Ovary (tissue), 10 donors: ENCODE measurements at regions of chr17 and their contacts with region 1.

Region 1: GRCh38 chr17:50071692-50072486 is 16.0 kb downstream of the ITGA3 start:
- DNase-seq: no peak
- H3K4me3 ChIP-seq: no peak overlapping the region
- H3K27ac ChIP-seq: no peak overlapping the region
- H3K4me1 ChIP-seq: no peaks in the 10 kb centered on the region
- H3K27me3 ChIP-seq: no peaks in the 10 kb centered on the region
- CTCF ChIP-seq: no peak
- EP300 ChIP-seq: no peak
- POLR2A ChIP-seq: no peak

Region 2: DNA sequence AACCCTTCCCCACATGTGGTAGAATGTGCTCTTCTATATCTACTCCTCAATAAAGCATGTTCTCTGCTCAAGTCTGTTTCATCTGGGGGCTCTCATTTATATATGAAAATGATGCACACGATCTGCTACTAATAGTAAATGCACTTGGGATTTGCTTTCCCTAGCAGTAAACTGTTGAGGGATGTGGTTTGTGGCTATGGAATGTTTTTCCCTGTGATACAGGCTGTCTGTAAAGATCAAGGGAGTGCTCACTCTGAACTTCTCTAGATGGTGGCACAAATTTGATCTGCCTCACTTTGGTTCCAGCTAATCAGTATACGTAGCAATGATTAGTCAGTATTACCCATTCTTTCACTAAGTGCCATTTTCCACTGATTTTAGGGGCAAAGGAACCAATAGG is 242.9 kb before region 1 on chr17:
- intact Hi-C with region 1: loop called in 1 of 4 experiments (anchors 5 kb)
- DNase-seq: no peak
- H3K4me3 ChIP-seq: no peak overlapping the region
- H3K27ac ChIP-seq: no peak overlapping the region
- H3K4me1 ChIP-seq: peaks cover 4% of the 10 kb centered on the region
- H3K27me3 ChIP-seq: no peaks in the 10 kb centered on the region
- CTCF ChIP-seq: no peak
- EP300 ChIP-seq: no peak
- POLR2A ChIP-seq: no peak

Region 3: DNA sequence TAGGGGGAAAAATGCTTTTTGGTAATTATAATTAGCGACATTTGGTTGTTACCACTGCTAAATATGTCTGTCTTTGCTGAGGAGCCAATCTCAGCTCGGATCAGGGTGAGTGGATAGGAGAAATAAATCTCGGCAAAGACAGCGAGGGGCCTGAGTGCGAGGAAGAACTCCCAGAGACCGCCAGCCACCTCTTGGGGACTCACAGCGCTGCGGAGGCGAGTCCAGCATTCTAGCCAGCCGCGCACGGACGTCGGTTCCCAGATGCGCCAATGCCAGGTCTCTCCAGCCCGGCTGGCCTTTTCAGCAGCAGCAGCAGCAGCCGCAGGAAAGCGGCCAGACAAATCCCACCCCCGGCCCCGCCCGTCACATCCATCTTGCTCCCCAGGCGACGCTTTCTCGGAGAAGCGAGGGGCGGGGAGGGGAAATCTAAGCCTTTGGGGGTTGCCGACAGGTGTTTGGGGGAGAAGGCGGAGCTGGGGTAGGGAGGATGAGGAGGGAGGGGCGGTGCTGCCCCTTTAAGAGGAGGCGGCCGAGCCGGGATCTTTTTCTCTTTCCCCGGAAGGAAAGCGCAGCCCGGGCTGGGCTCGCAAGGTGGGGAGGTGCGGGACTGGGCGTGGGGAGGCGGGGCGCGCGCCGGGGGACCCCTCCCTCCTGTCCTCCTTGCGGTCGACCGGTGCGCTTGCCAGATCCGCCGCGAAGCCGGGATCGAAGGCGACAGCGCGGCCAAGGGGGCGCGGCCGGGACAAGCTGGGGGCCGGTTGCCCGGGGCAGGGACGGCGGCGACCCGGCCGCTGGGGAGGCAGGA is 16.3 kb before region 1 on chr17 and contains the start of gene ITGA3:
- intact Hi-C with region 1: no loop called
- DNase-seq: peak; percentile 69 to 77 (median 76)
- H3K4me3 ChIP-seq: peak within 1 kb of the TSS; percentile 80
- H3K27ac ChIP-seq: peak within 1 kb of the TSS; percentile 66 to 93
- H3K4me1 ChIP-seq: peaks cover 33% of the 10 kb centered on the region
- H3K27me3 ChIP-seq: no peaks in the 10 kb centered on the region
- CTCF ChIP-seq: no peak
- EP300 ChIP-seq: no peak
- POLR2A ChIP-seq: peak; percentile 36
- total RNA-seq, gene ITGA3: 23.6 to 132 (median 41.7) TPM